ENCODE measurements at regions of chr15 and their contacts with region 1.

Region 1: GRCh38 chr15:27850981-27851857 is 247.9 kb downstream of the OCA2 start:
- DNase-seq: no peak
- H3K4me3 ChIP-seq: no peak overlapping the region
- H3K27ac ChIP-seq: no peak overlapping the region
- H3K27me3 ChIP-seq: no peaks in the 10 kb centered on the region
- CTCF ChIP-seq: no peak

Region 2: GRCh38 chr15:27797765-27798164 is 53.5 kb before region 1 on chr15:
- intact Hi-C with region 1: loop called in 1 of 2 experiments (anchors 10 kb)
- DNase-seq: peak in 1 of 10 donors; percentile 44
- H3K4me3 ChIP-seq: no peak overlapping the region
- H3K27ac ChIP-seq: no peak overlapping the region
- H3K27me3 ChIP-seq: peaks cover 0 to 13% (median 0%) of the 10 kb centered on the region in 45 donors
- CTCF ChIP-seq: no peak